Mammary epithelial cell (primary cell): ENCODE measurements at regions of chr16 and their contacts with region 1.

Region 1: DNA sequence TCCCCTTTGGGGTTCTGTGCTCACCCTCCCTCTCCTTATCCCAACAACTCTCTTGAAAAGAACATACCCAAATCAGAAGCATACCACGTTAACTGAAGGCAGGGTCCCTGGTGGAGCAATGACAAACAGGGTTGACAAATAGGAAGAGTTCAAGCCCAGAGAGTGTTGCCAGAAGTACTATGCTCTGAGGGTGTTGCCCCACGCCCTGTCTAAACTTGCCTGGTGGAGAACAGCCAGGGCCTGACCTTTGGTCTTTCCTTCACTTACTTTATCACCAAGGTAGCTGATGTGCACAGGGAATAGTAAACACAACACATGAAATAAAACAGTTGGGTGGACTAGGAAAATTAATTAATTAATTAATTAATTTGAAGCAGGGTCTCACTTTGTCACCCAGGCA is 23.3 kb downstream of the ZNF75A start:
- DNase-seq: no peak
- H3K4me3 ChIP-seq: no peak overlapping the region
- H3K27ac ChIP-seq: no peak overlapping the region
- H3K4me1 ChIP-seq: no peaks in the 10 kb centered on the region
- H3K27me3 ChIP-seq: no peaks in the 10 kb centered on the region
- CTCF ChIP-seq: no peak

Region 2: DNA sequence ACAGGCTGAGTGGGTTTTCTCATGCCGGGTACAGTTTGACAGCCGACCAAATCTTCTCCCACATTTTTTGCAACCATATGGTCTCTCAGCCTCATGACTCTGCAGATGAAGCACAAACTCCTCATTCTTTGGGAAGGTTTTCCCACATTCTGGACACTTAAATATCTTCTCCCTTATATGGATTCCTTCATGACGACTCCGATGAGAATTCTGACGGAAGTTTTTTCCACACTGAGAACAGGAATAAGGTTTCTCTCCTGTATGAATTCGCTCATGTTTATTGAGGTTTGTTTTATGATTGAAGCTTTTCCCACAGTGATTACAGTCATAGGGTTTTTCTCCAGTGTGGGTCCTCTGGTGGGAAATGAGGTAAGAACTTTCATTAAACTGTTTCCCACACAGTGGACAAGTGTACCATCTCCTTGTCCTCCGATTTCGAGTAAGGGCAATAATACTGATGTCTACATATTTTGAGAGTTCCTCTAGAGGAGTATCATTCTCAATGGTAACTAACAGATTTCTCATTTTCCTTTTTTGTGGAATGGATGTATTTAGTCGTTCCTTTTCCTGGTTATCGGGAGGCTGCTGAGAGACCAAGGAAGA is 104.6 kb before region 1 on chr16:
- CTCF ChIA-PET with region 1: no interaction called
- dilution Hi-C with region 1: no loop called
- in situ Hi-C with region 1: no loop called
- intact Hi-C with region 1: no loop called
- DNase-seq: no peak
- H3K4me3 ChIP-seq: no peak overlapping the region
- H3K27ac ChIP-seq: no peak overlapping the region
- H3K4me1 ChIP-seq: no peaks in the 10 kb centered on the region
- H3K27me3 ChIP-seq: no peaks in the 10 kb centered on the region
- CTCF ChIP-seq: no peak

Region 3: GRCh38 chr16:3246876-3247275 is 81.8 kb before region 1 on chr16:
- CTCF ChIA-PET with region 1: no interaction called
- dilution Hi-C with region 1: loop called (anchors 5 kb)
- in situ Hi-C with region 1: no loop called
- intact Hi-C with region 1: no loop called
- DNase-seq: no peak
- H3K4me3 ChIP-seq: no peak overlapping the region
- H3K27ac ChIP-seq: no peak overlapping the region
- H3K4me1 ChIP-seq: no peaks in the 10 kb centered on the region
- H3K27me3 ChIP-seq: no peaks in the 10 kb centered on the region
- CTCF ChIP-seq: no peak

Region 4: GRCh38 chr16:3317315-3317999 is 11.2 kb before region 1 on chr16:
- CTCF ChIA-PET with region 1: no interaction called
- dilution Hi-C with region 1: no loop called
- in situ Hi-C with region 1: no loop called
- intact Hi-C with region 1: loop called (anchors 1 kb)
- DNase-seq: no peak
- H3K4me3 ChIP-seq: no peak overlapping the region
- H3K27ac ChIP-seq: no peak overlapping the region
- H3K4me1 ChIP-seq: no peaks in the 10 kb centered on the region
- H3K27me3 ChIP-seq: no peaks in the 10 kb centered on the region
- CTCF ChIP-seq: no peak

Region 5: GRCh38 chr16:3480901-3481695 is 152.5 kb after region 1 on chr16:
- CTCF ChIA-PET with region 1: no interaction called
- dilution Hi-C with region 1: loop called (anchors 5 kb)
- in situ Hi-C with region 1: no loop called
- intact Hi-C with region 1: no loop called
- DNase-seq: no peak
- H3K4me3 ChIP-seq: no peak overlapping the region
- H3K27ac ChIP-seq: no peak overlapping the region
- H3K4me1 ChIP-seq: no peaks in the 10 kb centered on the region
- H3K27me3 ChIP-seq: no peaks in the 10 kb centered on the region
- CTCF ChIP-seq: no peak